ENCODE measurements at regions of chr2 and their contacts with region 1.

Region 1: GRCh38 chr2:36663851-36664695 is 32.4 kb upstream of the VIT start:
- DNase-seq: no peak
- ATAC-seq: peak; percentile 83 to 85

Region 2: GRCh38 chr2:36348721-36349120 is 315.4 kb before region 1 on chr2:
- intact Hi-C with region 1: loop called (anchors 1 to 5 kb)
- DNase-seq: no peak
- ATAC-seq: no peak

Region 3: GRCh38 chr2:36507408-36507812 is 156.7 kb before region 1 on chr2:
- intact Hi-C with region 1: loop called in 1 of 2 experiments (anchors 10 kb)
- DNase-seq: peak; percentile 40
- ATAC-seq: peak; percentile 86 to 98

Region 4: GRCh38 chr2:36530178-36530982 is 133.7 kb before region 1 on chr2:
- intact Hi-C with region 1: loop called in 1 of 2 experiments (anchors 10 kb)
- DNase-seq: no peak
- ATAC-seq: peak in 1 of 2 donors; percentile 34

Region 5: DNA sequence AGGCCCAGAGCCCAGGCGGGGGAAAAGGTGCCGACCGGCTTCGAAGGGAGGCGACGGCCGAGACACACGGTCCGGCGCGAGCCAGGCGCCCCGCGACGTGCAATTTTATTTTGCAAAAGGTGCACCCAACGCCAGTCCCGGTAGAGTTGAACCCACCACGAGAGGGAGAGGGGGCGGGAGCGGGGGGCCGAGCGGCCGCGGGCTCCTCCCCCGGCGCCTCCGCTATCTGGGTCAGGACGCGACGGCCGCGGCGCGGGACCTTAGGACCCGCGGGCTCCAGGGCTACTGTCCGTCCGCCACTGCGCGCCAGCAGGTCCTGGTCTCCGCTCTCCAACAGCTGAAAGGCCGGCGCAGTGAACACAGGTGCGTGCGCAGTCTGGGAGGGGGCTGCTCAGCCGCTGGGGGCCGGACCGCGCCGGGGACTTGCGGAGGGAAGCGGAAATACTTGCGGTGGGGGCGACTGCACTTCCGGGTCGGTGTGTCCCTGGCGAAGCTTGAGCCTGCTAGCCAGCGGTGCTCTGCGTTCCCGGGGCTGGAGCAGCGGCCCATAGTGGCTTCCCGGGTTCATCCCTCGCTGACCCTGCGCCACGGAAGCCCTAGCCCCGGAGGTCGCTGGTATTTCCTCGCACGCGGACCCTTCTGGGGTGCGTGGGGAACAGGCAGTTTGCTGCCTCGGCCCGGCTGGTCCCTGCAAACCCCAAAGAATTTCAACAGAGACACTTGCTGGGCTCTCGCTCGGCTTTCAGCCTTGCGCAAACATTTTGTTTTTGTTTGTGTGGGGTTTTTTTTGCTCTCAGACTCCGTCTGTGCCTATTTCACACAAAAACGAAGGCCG is 1261.2 kb after region 1 on chr2 and contains the start of gene RMDN2:
- intact Hi-C with region 1: no loop called
- DNase-seq: peak; percentile 94
- ATAC-seq: peak; percentile 98 to 99
- total RNA-seq, gene RMDN2: 4.6 to 5.8 TPM

Measured in left cardiac atrium (tissue), 4 donors.